ENCODE measurements at regions of chr2 and their contacts with region 1.

Region 1: DNA sequence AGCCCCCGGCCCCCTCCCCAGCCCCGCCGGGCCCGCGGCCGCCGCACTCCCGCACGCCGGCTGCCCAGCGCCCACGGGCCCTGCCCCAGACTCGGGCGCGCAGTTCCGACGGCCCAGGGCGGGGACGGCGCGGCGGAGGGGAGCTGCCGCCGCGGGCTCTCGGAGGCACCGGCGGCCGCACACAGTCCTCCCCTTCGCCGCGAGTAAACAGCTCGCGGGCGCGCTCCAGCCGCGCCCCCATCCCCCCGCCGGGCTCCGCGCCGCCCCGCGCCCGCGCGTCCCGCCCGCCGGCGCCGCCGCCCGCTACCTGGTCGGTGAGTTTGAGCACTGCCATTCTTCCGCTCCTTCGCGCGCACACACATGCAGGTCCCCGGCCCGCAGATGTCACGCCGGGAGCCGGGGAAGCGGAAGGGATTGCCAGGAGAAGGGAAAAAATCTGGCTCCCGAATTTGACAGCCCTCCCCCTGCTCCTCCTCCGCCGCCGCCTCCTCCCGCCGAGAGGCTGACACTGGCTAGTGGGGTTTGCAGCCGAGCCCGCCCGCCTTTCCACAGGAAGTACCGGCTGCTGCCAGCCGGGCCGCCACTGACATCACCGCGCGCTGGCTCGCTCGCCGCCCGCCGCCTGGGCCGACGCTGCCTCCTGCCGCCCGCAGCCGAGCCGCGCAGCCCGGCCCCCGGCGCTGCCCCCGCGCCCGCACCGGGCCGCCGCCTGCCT is at the start of gene ANKRD44:
- DNase-seq: peak; percentile 94
- ATAC-seq: peak; percentile 78
- H3K4me3 ChIP-seq: peak within 1 kb of the TSS; percentile 73 to 97 (median 92)
- H3K4me3 Mint-ChIP-seq: peak within 1 kb of the TSS; percentile 97
- H3K27ac ChIP-seq: peak within 1 kb of the TSS; percentile 80 to 86
- H3K27ac Mint-ChIP-seq: peak within 1 kb of the TSS; percentile 95
- H3K4me1 ChIP-seq: peaks cover 34 to 35% of the 10 kb centered on the region in 2 donors
- H3K4me1 Mint-ChIP-seq: peaks cover 44% of the 10 kb centered on the region
- H3K27me3 ChIP-seq: no peaks in the 10 kb centered on the region
- H3K27me3 Mint-ChIP-seq: no peaks in the 10 kb centered on the region
- CTCF ChIP-seq: peak; percentile 34
- total RNA-seq, gene ANKRD44: 450 and 457 TPM in 2 replicates

Region 2: GRCh38 chr2:196660244-196660643 is 650.2 kb before region 1 on chr2:
- CTCF ChIA-PET with region 1: no interaction called
- POLR2A ChIA-PET with region 1: no interaction called
- intact Hi-C with region 1: no loop called
- DNase-seq: no peak
- ATAC-seq: no peak
- H3K4me3 ChIP-seq: no peak overlapping the region
- H3K4me3 Mint-ChIP-seq: no peak overlapping the region
- H3K27ac ChIP-seq: no peak overlapping the region
- H3K27ac Mint-ChIP-seq: no peak overlapping the region
- H3K4me1 ChIP-seq: no peaks in the 10 kb centered on the region
- H3K4me1 Mint-ChIP-seq: no peaks in the 10 kb centered on the region
- H3K27me3 ChIP-seq: no peaks in the 10 kb centered on the region
- H3K27me3 Mint-ChIP-seq: no peaks in the 10 kb centered on the region
- CTCF ChIP-seq: no peak

Region 3: DNA sequence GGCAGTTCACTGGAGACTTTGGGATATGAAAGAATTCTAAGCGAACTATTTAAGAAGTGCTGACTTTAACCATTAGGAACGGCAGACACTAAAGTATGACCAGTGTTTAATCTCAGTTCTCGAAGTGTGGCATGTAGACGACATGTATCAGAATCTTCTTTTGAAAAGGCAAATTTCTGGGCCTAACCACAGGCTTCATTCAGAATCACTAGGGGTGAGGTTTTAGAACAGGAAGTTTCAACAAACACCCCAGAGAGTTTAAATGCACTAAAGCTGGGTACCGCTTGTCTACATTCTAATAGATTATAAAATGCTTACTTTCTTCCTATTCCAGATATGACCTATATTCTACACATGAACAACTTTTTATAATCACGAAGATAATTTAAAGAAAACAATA is 180.1 kb before region 1 on chr2:
- CTCF ChIA-PET with region 1: interaction called, 11 read pairs
- POLR2A ChIA-PET with region 1: interaction called, 3 read pairs
- intact Hi-C with region 1: loop called (anchors 2 kb)
- DNase-seq: peak; percentile 75
- ATAC-seq: peak; percentile 70
- H3K4me3 ChIP-seq: peak overlapping the region in 3 of 5 experiments; percentile 14 to 52 (median 21)
- H3K4me3 Mint-ChIP-seq: peak overlapping the region; percentile 84
- H3K27ac ChIP-seq: peak overlapping the region; percentile 81 to 82
- H3K27ac Mint-ChIP-seq: peak overlapping the region; percentile 96
- H3K4me1 ChIP-seq: peaks cover 66 to 69% of the 10 kb centered on the region in 2 donors
- H3K4me1 Mint-ChIP-seq: peaks cover 69% of the 10 kb centered on the region
- H3K27me3 ChIP-seq: no peaks in the 10 kb centered on the region
- H3K27me3 Mint-ChIP-seq: no peaks in the 10 kb centered on the region
- CTCF ChIP-seq: no peak

Region 4: GRCh38 chr2:197152451-197153228 is 157.8 kb before region 1 on chr2:
- CTCF ChIA-PET with region 1: interaction called, 23 read pairs
- POLR2A ChIA-PET with region 1: interaction called, 16 read pairs
- intact Hi-C with region 1: no loop called
- DNase-seq: peak; percentile 89
- ATAC-seq: peak; percentile 87
- H3K4me3 ChIP-seq: peak overlapping the region; percentile 4 to 40 (median 29)
- H3K4me3 Mint-ChIP-seq: peak overlapping the region; percentile 74
- H3K27ac ChIP-seq: peak overlapping the region; percentile 93
- H3K27ac Mint-ChIP-seq: peak overlapping the region; percentile 90
- H3K4me1 ChIP-seq: peaks cover 81 to 88% of the 10 kb centered on the region in 2 donors
- H3K4me1 Mint-ChIP-seq: peaks cover 79% of the 10 kb centered on the region
- H3K27me3 ChIP-seq: no peaks in the 10 kb centered on the region
- H3K27me3 Mint-ChIP-seq: no peaks in the 10 kb centered on the region
- CTCF ChIP-seq: peak; percentile 69

Region 5: DNA sequence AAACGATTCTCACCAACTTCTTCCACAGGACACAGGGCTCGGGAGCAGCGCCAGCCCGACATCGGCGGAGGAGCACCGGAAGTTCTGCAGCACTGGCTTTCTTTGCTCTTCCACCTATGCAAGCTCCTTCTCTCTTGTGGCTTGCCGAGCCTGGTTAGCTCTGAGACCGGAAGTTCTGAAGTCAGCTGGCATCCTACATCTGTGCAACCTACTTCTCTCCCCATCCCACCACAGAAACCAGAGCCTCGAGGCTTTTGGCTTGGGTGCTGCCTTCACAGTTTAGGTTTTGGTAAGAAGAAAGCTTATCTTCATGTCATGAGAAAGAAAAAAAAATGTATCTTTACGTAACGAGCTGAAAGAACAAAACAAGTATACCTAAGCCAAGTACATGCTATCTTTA is 111.5 kb before region 1 on chr2:
- CTCF ChIA-PET with region 1: interaction called, 336 read pairs
- POLR2A ChIA-PET with region 1: interaction called, 38 read pairs
- intact Hi-C with region 1: loop called (anchors 2 kb)
- DNase-seq: peak; percentile 93
- ATAC-seq: peak; percentile 96
- H3K4me3 ChIP-seq: peak overlapping the region; percentile 30 to 60 (median 57)
- H3K4me3 Mint-ChIP-seq: peak overlapping the region; percentile 93
- H3K27ac ChIP-seq: peak overlapping the region; percentile 68 to 86
- H3K27ac Mint-ChIP-seq: peak overlapping the region; percentile 97
- H3K4me1 ChIP-seq: peaks cover 68 to 71% of the 10 kb centered on the region in 2 donors
- H3K4me1 Mint-ChIP-seq: peaks cover 84% of the 10 kb centered on the region
- H3K27me3 ChIP-seq: no peaks in the 10 kb centered on the region
- H3K27me3 Mint-ChIP-seq: no peaks in the 10 kb centered on the region
- CTCF ChIP-seq: no peak

Region 6: GRCh38 chr2:197255543-197255942 is 54.9 kb before region 1 on chr2:
- CTCF ChIA-PET with region 1: interaction called, 40 read pairs
- POLR2A ChIA-PET with region 1: interaction called, 3 read pairs
- intact Hi-C with region 1: loop called (anchors 1 kb)
- DNase-seq: peak; percentile 91
- ATAC-seq: peak; percentile 97
- H3K4me3 ChIP-seq: peak overlapping the region; percentile 18 to 84 (median 49)
- H3K4me3 Mint-ChIP-seq: peak overlapping the region; percentile 87
- H3K27ac ChIP-seq: peak overlapping the region; percentile 90 to 93
- H3K27ac Mint-ChIP-seq: peak overlapping the region; percentile 90
- H3K4me1 ChIP-seq: peaks cover 69 to 74% of the 10 kb centered on the region in 2 donors
- H3K4me1 Mint-ChIP-seq: peaks cover 74% of the 10 kb centered on the region
- H3K27me3 ChIP-seq: no peaks in the 10 kb centered on the region
- H3K27me3 Mint-ChIP-seq: no peaks in the 10 kb centered on the region
- CTCF ChIP-seq: no peak

Region 7: DNA sequence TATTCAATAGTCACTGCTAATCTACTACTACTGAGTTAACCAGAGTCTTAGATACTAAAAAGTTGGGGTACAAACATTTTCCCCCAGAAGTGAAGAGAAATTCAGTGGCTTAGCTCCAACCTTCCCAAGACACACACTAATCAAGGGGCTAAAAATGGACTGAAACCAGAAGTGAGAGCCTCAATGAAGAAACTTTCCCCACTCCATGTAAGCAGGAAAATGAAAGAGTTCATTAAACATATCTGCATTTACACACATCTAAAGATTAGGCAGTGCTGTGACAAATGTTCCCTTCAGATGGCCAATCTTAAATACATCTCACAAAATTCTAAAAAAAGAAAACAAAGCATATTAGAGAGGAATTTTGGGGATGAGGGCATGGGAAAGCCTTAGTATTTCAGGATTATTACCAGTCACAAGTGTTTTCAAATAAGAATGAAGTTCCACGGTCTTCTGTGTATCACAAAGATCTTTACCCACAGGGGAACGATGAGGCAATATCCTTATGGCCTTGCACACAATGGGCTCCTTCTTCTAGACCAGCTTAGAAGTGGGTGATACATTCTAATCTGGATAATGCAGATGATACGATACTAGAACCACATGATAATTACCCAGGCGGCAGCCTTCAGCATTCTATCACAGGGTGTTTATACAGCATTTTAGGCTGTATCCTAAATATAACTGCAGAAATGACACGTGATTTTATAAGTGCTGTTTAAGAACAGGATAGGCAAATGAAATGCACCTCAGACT is 17.0 kb before region 1 on chr2:
- CTCF ChIA-PET with region 1: interaction called, 9 read pairs
- POLR2A ChIA-PET with region 1: interaction called, 6 read pairs
- intact Hi-C with region 1: loop called (anchors 1 kb)
- DNase-seq: peak; percentile 29
- ATAC-seq: peak; percentile 31
- H3K4me3 ChIP-seq: peak overlapping the region; percentile 14 to 69 (median 50)
- H3K4me3 Mint-ChIP-seq: peak overlapping the region; percentile 86
- H3K27ac ChIP-seq: peak overlapping the region; percentile 69 to 86
- H3K27ac Mint-ChIP-seq: peak overlapping the region; percentile 84
- H3K4me1 ChIP-seq: peaks cover 72 to 88% of the 10 kb centered on the region in 2 donors
- H3K4me1 Mint-ChIP-seq: peaks cover 81% of the 10 kb centered on the region
- H3K27me3 ChIP-seq: no peaks in the 10 kb centered on the region
- H3K27me3 Mint-ChIP-seq: no peaks in the 10 kb centered on the region
- CTCF ChIP-seq: no peak